ENCODE measurements at regions of chr9 and their contacts with region 1.

Region 1: GRCh38 chr9:37592108-37592951 is at the start of gene TOMM5:
- DNase-seq: peak; percentile 83 to 95 (median 86)
- ATAC-seq: peak; percentile 94
- H3K4me3 ChIP-seq: peak within 1 kb of the TSS; percentile 100
- H3K4me3 Mint-ChIP-seq: peak within 1 kb of the TSS; percentile 99
- H3K27ac ChIP-seq: peak within 1 kb of the TSS in 1 of 2 donors; percentile 64
- H3K27ac Mint-ChIP-seq: peak within 1 kb of the TSS; percentile 92
- H3K4me1 ChIP-seq: peaks cover 33% of the 10 kb centered on the region
- H3K4me1 Mint-ChIP-seq: peaks cover 50% of the 10 kb centered on the region
- H3K27me3 ChIP-seq: peaks cover 7% of the 10 kb centered on the region in 2 experiments
- H3K27me3 Mint-ChIP-seq: peaks cover 12% of the 10 kb centered on the region
- CTCF ChIP-seq: no peak
- total RNA-seq, gene TOMM5: 31.4 to 35.3 TPM

Region 2: DNA sequence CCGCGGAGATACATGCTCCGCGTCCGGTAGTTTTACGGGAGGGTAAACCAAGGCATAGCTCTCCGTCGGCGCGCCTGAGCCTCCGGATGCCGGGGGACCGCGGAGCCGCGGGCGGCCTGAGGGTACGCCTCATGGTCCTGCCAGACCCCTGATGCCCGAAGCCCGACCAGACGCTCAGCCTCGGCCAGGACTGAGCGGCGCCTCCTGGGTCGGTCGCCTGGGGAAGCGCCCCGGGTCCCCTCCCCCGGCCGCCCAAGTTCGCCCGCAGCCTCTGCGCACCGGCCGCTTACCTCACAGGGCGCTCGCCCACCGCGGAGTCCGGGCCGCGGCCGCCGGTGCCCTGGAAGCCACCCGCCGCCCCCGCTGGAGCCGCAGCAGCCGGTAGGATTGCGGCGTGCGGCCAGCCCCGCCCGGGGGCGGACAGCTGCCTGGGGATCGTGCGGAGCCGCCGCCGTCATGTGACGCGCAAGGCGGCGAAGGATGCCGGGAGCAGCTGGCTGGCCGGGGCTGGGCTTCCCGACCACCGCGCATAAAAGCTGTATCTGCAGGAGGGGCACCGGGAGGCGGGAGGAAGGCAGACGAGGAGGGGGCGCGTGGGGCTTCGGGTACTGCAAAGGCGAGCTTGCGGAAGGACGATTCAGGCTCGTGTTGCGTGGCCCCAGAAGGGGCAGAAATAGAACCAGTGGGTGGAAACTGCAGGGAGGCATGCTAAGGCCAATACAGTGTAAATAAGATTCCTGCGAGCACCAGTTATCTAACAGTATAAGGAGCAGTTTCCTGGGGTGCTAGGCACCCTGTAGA is 16.2 kb before region 1 on chr9 and contains the start of gene FBXO10:
- CTCF ChIA-PET with region 1: interaction called, 4 read pairs
- POLR2A ChIA-PET with region 1: interaction called, 28 read pairs
- intact Hi-C with region 1: no loop called
- DNase-seq: peak in 13 of 14 experiments; percentile 5 to 74 (median 27)
- ATAC-seq: peak; percentile 85
- H3K4me3 ChIP-seq: peak within 1 kb of the TSS; percentile 65
- H3K4me3 Mint-ChIP-seq: peak within 1 kb of the TSS; percentile 93
- H3K27ac ChIP-seq: no peak within 1 kb of the TSS
- H3K27ac Mint-ChIP-seq: peak within 1 kb of the TSS; percentile 43
- H3K4me1 ChIP-seq: peaks cover 13% of the 10 kb centered on the region
- H3K4me1 Mint-ChIP-seq: peaks cover 24% of the 10 kb centered on the region
- H3K27me3 ChIP-seq: no peaks in the 10 kb centered on the region
- H3K27me3 Mint-ChIP-seq: no peaks in the 10 kb centered on the region
- CTCF ChIP-seq: no peak
- total RNA-seq, gene FBXO10: 0.81 to 2.3 TPM

Region 3: DNA sequence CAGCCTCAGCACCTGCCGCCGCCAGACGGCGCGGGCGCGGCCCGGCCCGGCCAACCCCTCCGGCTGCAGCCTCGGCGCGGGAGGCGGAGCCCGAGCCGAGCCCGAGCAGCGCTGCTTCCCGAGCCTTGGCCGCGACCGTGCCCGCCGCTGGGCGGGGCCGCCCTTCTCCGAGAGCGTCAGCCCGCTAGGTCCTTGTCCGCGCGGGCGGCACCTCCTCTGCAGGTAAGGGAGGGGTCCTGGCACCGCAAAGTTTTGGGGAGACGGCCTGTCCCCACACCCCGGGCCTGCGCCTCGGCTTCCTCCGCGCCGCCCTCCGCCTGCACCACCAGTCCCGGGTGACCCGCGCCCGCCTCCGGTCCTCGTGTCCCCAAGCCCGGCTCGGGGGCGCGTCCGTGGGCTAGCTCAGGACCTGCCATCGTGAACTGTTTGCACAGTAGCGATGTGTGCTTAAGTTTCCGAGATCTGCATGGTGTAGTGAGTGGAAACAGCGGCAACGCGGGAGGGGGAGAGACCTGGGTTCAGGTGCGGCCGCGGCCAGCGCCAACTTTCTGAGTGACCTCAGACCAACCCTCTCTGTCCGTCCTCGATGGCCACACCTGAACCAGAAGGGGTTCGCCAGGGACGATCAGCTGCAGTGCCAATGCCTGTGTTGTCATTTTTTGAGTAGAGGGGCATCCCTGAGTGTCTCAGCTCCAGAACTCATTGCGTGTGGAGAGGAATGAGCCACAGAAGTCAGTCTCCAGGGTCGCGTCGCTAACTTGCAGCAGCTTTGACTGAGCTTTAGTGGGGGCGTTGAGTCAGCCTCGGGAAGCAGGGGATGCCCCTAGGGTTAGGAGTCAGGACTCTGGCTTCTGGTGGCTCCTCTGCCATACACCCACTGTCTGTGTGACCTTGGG is 58.8 kb after region 1 on chr9 and contains the start of gene FRMPD1:
- CTCF ChIA-PET with region 1: no interaction called
- POLR2A ChIA-PET with region 1: no interaction called
- intact Hi-C with region 1: no loop called
- DNase-seq: peak; percentile 19 to 80 (median 50)
- ATAC-seq: peak; percentile 88
- H3K4me3 ChIP-seq: peak within 1 kb of the TSS; percentile 53
- H3K4me3 Mint-ChIP-seq: peak within 1 kb of the TSS; percentile 87
- H3K27ac ChIP-seq: no peak within 1 kb of the TSS
- H3K27ac Mint-ChIP-seq: no peak within 1 kb of the TSS
- H3K4me1 ChIP-seq: peaks cover 16% of the 10 kb centered on the region
- H3K4me1 Mint-ChIP-seq: peaks cover 14% of the 10 kb centered on the region
- H3K27me3 ChIP-seq: peaks cover 50 to 59% of the 10 kb centered on the region in 2 experiments
- H3K27me3 Mint-ChIP-seq: peaks cover 80% of the 10 kb centered on the region
- CTCF ChIP-seq: no peak
- total RNA-seq, gene FRMPD1: not detected

Region 4: GRCh38 chr9:37840560-37841194 is 248.3 kb after region 1 on chr9:
- CTCF ChIA-PET with region 1: no interaction called
- POLR2A ChIA-PET with region 1: no interaction called
- intact Hi-C with region 1: no loop called
- DNase-seq: no peak
- ATAC-seq: no peak
- H3K4me3 ChIP-seq: no peak overlapping the region
- H3K4me3 Mint-ChIP-seq: no peak overlapping the region
- H3K27ac ChIP-seq: no peak overlapping the region
- H3K27ac Mint-ChIP-seq: no peak overlapping the region
- H3K4me1 ChIP-seq: no peaks in the 10 kb centered on the region
- H3K4me1 Mint-ChIP-seq: peaks cover 8% of the 10 kb centered on the region
- H3K27me3 ChIP-seq: no peaks in the 10 kb centered on the region
- H3K27me3 Mint-ChIP-seq: no peaks in the 10 kb centered on the region
- CTCF ChIP-seq: no peak

Region 5: DNA sequence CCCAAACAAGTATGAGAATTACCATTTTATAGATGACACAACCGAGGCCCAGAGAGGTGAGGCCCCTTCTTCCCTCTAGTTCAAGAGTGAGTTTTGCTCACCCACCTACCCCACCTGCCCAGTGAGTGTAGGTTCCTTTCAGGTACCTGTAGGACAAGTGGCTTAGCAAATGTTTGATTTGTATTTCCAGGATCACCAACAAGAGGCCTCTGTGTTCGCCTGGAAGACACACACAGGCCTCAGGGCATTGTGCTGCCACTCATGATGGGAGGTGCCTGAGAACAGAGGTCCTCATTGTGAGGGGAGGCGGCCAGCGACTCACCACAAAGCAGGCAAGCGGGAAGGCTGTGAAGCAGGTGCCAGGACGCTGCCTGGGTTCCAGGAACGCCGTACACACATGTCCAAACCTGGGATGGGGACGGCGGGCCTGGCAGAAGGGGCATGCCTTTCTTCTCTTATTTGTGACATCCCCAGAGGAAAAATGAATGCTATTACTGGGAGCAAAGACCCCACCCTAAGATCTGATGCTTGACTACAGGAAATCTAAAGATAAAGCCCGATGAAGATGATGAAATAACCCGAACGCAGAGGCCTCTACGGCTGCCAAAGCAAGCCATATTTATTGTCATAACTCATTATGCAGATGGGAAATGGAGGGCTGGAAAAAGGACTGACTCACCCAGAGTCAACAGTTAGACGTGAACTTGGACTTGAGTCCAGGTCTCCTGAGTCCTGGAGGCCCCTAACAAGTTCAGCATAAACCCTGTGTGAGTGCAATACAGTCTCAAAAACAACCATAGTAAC is 371.8 kb after region 1 on chr9:
- CTCF ChIA-PET with region 1: no interaction called
- POLR2A ChIA-PET with region 1: no interaction called
- intact Hi-C with region 1: no loop called
- DNase-seq: no peak
- ATAC-seq: no peak
- H3K4me3 ChIP-seq: no peak overlapping the region
- H3K4me3 Mint-ChIP-seq: no peak overlapping the region
- H3K27ac ChIP-seq: no peak overlapping the region
- H3K27ac Mint-ChIP-seq: no peak overlapping the region
- H3K4me1 ChIP-seq: no peaks in the 10 kb centered on the region
- H3K4me1 Mint-ChIP-seq: no peaks in the 10 kb centered on the region
- H3K27me3 ChIP-seq: no peaks in the 10 kb centered on the region
- H3K27me3 Mint-ChIP-seq: no peaks in the 10 kb centered on the region
- CTCF ChIP-seq: no peak